Activated T-helper 1 cell treated with anti-CD3 and anti-CD28 coated beads, Interleukin-12 subunit alpha, Interleukin-12 subunit beta, Interleukin-2, Interleukin-4 antibody, amounts not matched to agents 30 ng/mL and 10 ng/mL and 1 ng/mL, durations not matched to agents 14 hours and 24 hours and 36 hours (primary cell): ENCODE measurements at regions of chr7 and their contacts with region 1.

Region 1: GRCh38 chr7:41621986-41622831 is 80.7 kb downstream of the INHBA start:
- DNase-seq: no peak
- H3K4me3 Mint-ChIP-seq: no peak overlapping the region
- H3K27ac Mint-ChIP-seq: no peak overlapping the region
- H3K4me1 Mint-ChIP-seq: peaks cover 5% of the 10 kb centered on the region
- H3K27me3 Mint-ChIP-seq: peaks cover 3% of the 10 kb centered on the region

Region 2: DNA sequence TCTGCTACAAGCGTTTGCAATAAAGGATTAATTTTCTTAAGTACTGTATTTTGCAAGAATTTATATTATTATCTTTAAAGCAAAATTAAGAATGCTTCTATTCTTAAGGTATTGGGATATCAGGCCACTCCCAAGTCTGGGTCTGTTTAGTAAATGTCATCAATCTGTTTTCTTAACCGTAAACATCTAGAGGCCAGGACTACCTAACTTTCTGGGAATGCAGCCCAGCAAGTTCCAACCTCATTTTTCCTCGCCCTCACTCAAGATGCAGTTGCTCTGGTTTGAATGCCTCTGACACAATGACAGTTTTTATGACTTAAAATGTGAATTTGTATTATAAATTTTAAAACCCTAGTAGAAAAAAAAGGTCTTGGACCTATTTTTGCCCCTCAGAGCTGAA is 62.8 kb before region 1 on chr7:
- intact Hi-C with region 1: no loop called
- DNase-seq: no peak
- H3K4me3 Mint-ChIP-seq: no peak overlapping the region
- H3K27ac Mint-ChIP-seq: no peak overlapping the region
- H3K4me1 Mint-ChIP-seq: no peaks in the 10 kb centered on the region
- H3K27me3 Mint-ChIP-seq: no peaks in the 10 kb centered on the region

Region 3: DNA sequence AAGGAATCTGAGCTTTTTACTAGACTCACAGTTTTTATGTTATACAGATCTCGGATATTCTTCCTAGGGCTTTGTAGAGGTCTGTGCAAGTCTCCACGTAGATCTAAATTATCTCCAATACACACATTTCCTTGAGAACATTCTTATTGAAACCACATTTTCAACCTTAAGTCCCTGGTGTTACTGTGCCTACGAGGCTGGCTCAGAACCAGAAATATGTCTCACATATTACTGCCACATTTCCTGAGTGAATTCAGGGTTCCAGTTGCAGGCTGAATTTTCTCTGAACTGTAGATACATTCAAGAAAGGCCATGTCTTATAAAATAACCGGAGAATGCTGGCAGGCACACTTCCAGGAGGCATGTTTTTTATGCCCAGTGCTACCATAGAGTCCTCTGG is 34.2 kb after region 1 on chr7:
- intact Hi-C with region 1: loop called (anchors 1 kb)
- DNase-seq: no peak
- H3K4me3 Mint-ChIP-seq: no peak overlapping the region
- H3K27ac Mint-ChIP-seq: no peak overlapping the region
- H3K4me1 Mint-ChIP-seq: no peaks in the 10 kb centered on the region
- H3K27me3 Mint-ChIP-seq: peaks cover 2% of the 10 kb centered on the region